GM12878 (cell line): ENCODE measurements at regions of chr5 and their contacts with region 1.

Region 1: GRCh38 chr5:72523960-72524582 is 16.9 kb upstream of the ZNF366 start:
- DNase-seq: peak; percentile 52
- ATAC-seq: peak; percentile 94
- H3K4me3 ChIP-seq: no peak overlapping the region
- H3K27ac ChIP-seq: no peak overlapping the region
- H3K4me1 ChIP-seq: no peaks in the 10 kb centered on the region
- H3K27me3 ChIP-seq: no peaks in the 10 kb centered on the region
- CTCF ChIP-seq: peak; percentile 50 to 86 (median 66); a peak in 5 of 6 replicates
- EP300 ChIP-seq: no peak; a peak in 1 of 4 replicates
- POLR2A ChIP-seq: no peak
- RAD21 ChIP-seq: peak; percentile 99

Region 2: GRCh38 chr5:72063219-72063819 is 460.8 kb before region 1 on chr5:
- CTCF ChIA-PET with region 1: no interaction called
- POLR2A ChIA-PET with region 1: no interaction called
- RAD21 ChIA-PET with region 1: no interaction called
- SMC1A ChIA-PET with region 1: no interaction called
- in situ Hi-C with region 1: no loop called
- intact Hi-C with region 1: no loop called
- DNase-seq: no peak
- ATAC-seq: no peak
- H3K4me3 ChIP-seq: no peak overlapping the region
- H3K27ac ChIP-seq: no peak overlapping the region
- H3K4me1 ChIP-seq: no peaks in the 10 kb centered on the region
- H3K27me3 ChIP-seq: no peaks in the 10 kb centered on the region
- CTCF ChIP-seq: no peak
- EP300 ChIP-seq: no peak
- POLR2A ChIP-seq: no peak
- RAD21 ChIP-seq: no peak

Region 3: DNA sequence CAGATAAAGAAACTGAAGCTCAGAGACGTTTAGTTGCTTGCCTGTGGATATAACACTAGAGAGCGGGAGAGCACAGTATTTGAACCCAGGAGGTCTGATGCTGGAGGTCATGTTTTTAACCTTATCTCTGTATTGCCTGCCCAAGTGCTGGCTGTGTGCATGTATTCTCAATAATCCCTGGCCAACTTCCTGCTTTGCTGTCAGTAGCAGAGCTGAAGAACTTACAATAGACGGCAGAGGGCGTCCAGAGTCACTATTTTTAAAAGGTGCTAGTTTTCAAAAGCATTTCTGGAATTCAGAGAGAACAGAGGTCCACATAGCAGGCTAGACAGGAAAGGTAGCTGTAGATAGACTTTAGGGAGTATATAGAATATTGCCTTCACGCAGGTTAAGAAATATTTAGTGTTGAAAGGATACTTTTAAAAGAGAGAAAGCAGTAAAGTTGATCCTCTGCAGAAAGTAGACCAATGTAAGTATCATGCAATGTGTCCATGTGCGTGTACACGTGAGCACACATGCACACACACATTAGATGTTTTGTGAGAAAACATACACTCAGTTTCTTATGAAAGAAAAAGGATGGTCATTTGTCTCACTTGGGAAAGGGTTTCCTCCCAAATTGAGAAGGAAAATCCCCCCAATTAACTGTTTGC is 157.6 kb before region 1 on chr5:
- CTCF ChIA-PET with region 1: interaction called, 238 read pairs
- POLR2A ChIA-PET with region 1: interaction called, 11 read pairs
- RAD21 ChIA-PET with region 1: interaction called, 159 read pairs
- SMC1A ChIA-PET with region 1: interaction called, 214 read pairs
- in situ Hi-C with region 1: loop called (anchors 10 kb)
- intact Hi-C with region 1: loop called (anchors 1 kb)
- DNase-seq: peak; percentile 43
- ATAC-seq: peak; percentile 98
- H3K4me3 ChIP-seq: no peak overlapping the region
- H3K27ac ChIP-seq: no peak overlapping the region
- H3K4me1 ChIP-seq: peaks cover 17% of the 10 kb centered on the region
- H3K27me3 ChIP-seq: no peaks in the 10 kb centered on the region
- CTCF ChIP-seq: peak; percentile 67 to 82 (median 76)
- EP300 ChIP-seq: no peak
- POLR2A ChIP-seq: no peak
- RAD21 ChIP-seq: peak; percentile 97

Region 4: DNA sequence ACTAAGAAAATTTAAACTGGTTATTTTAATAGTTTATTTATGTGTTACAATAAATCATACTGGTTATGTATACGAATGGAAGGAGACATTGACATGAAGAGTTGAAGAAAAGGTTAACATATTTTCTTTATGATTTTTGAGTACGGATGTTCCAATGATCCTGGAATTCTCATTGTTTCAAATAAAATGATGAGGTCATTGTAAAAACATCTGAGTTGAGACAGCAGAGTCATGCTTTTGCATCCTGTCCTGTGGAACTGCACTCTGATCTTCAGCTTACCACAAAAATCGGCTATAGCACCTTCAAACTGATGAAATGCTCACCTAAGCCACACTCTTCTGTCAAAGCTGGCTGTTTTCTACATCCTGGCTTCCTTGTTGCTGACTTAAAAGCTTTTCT is 136.1 kb before region 1 on chr5:
- CTCF ChIA-PET with region 1: interaction called, 323 read pairs
- POLR2A ChIA-PET with region 1: no interaction called
- RAD21 ChIA-PET with region 1: interaction called, 122 read pairs
- SMC1A ChIA-PET with region 1: interaction called, 159 read pairs
- in situ Hi-C with region 1: no loop called
- intact Hi-C with region 1: no loop called
- DNase-seq: no peak
- ATAC-seq: no peak
- H3K4me3 ChIP-seq: no peak overlapping the region
- H3K27ac ChIP-seq: no peak overlapping the region
- H3K4me1 ChIP-seq: no peaks in the 10 kb centered on the region
- H3K27me3 ChIP-seq: no peaks in the 10 kb centered on the region; a peak in 1 of 4 replicates
- CTCF ChIP-seq: no peak
- EP300 ChIP-seq: no peak
- POLR2A ChIP-seq: no peak
- RAD21 ChIP-seq: no peak

Region 5: DNA sequence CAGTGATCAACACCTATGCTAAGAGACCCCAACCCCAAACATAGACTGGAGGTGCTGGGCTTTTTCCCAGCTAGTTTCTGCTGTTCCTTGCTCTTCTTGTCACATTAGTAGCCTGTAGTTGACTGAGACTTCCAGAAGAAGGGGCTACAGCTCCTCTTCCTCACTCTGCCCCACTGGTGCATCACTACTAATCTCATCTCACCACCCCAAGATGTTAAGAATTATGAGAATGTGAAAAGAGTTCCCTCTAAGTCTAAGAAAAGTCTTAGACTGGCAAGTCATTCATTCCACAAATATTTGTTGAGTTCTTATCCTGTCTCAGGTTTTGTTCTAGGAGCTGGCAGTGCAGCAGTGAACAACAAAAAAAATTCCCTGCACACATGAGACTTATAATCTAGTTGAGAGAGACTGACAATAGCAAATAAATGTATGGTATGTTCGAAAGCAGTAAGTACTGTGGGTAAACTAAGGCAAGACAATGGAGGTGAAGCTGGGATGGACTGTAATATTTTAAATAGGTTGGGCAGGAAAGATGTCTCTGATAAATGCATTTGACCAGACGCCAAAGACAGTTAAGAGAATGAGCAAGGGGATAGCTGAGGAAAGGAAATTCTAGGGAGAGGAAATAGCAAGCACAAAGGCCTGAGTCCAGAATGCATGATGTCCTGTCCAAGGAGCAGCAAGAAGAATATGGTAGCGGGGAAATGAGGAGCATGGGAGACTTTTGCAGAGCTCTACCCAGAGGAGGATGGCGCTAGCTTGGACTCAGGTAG is 111.6 kb before region 1 on chr5:
- CTCF ChIA-PET with region 1: interaction called, 323 read pairs
- POLR2A ChIA-PET with region 1: no interaction called
- RAD21 ChIA-PET with region 1: interaction called, 34 read pairs
- SMC1A ChIA-PET with region 1: interaction called, 74 read pairs
- in situ Hi-C with region 1: no loop called
- intact Hi-C with region 1: no loop called
- DNase-seq: no peak
- ATAC-seq: no peak
- H3K4me3 ChIP-seq: no peak overlapping the region
- H3K27ac ChIP-seq: no peak overlapping the region
- H3K4me1 ChIP-seq: peaks cover 8% of the 10 kb centered on the region; the same call in 1 of the 2 replicates
- H3K27me3 ChIP-seq: no peaks in the 10 kb centered on the region
- CTCF ChIP-seq: peak in 2 of 3 experiments; percentile 7 to 18; a peak in 2 of 6 replicates
- EP300 ChIP-seq: no peak
- POLR2A ChIP-seq: no peak
- RAD21 ChIP-seq: peak; percentile 60

Region 6: DNA sequence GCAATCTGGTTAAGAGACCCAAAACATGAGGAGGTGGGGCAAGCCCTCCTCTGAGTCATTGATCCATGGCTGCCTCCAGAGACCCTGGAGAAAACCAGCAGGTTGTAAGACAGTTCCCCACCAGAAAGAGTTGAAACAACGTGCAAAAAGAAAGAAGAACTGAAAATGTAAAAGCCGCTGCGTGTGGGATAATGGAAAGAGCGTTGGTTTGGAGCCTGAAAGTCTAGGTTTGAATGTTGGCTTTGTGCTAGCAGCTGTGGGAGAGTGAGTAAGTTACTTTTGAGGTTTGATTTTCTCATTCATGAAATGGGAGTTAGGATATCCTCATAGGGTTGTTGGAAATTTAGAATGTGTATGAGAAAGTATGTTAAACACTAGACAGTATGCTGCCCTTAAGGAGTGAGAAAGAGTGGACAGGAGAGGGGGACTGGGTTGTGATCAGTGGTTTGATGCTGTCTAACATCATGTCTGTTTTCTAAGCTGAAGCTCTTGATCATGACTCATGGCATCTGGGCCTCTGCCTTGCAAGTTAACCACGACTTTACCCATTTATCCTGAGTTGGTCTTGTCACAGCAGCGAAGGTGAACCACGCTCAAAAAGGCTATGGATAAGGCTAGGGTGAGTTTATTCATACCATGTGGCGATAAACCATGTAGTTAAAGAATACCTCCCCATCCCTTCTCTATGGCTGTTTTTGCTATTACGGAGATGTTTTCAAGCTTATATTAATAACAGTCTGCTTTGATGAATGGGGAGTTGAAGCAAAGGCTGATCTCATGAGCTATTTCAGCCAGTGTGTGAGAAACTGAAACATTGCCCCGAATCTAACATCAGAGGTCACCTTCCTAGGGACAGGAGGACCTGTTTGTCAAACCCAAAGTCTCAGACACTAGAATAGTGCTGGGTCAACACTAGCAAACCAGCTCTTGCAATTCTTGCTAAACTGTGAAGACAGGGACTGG is 58.2 kb before region 1 on chr5:
- CTCF ChIA-PET with region 1: interaction called, 24 read pairs
- POLR2A ChIA-PET with region 1: interaction called, 5 read pairs
- RAD21 ChIA-PET with region 1: interaction called, 27 read pairs
- SMC1A ChIA-PET with region 1: interaction called, 21 read pairs
- in situ Hi-C with region 1: no loop called
- intact Hi-C with region 1: loop called (anchors 1 kb)
- DNase-seq: peak; percentile 92
- ATAC-seq: peak; percentile 83
- H3K4me3 ChIP-seq: peak overlapping the region; percentile 43
- H3K27ac ChIP-seq: peak overlapping the region; percentile 98
- H3K4me1 ChIP-seq: peaks cover 44% of the 10 kb centered on the region
- H3K27me3 ChIP-seq: no peaks in the 10 kb centered on the region
- CTCF ChIP-seq: no peak
- EP300 ChIP-seq: peak; percentile 85 to 92
- POLR2A ChIP-seq: peak; percentile 39; the same call in 1 of the 2 replicates
- RAD21 ChIP-seq: peak; percentile 35; the same call in 1 of the 2 replicates

Region 7: GRCh38 chr5:72510610-72511181 is 13.4 kb before region 1 on chr5:
- CTCF ChIA-PET with region 1: interaction called, 24 read pairs
- POLR2A ChIA-PET with region 1: interaction called, 5 read pairs
- RAD21 ChIA-PET with region 1: interaction called, 11 read pairs
- SMC1A ChIA-PET with region 1: interaction called, 34 read pairs
- in situ Hi-C with region 1: no loop called
- intact Hi-C with region 1: no loop called
- DNase-seq: no peak
- ATAC-seq: no peak
- H3K4me3 ChIP-seq: no peak overlapping the region
- H3K27ac ChIP-seq: peak overlapping the region; percentile 33
- H3K4me1 ChIP-seq: peaks cover 45% of the 10 kb centered on the region
- H3K27me3 ChIP-seq: no peaks in the 10 kb centered on the region
- CTCF ChIP-seq: no peak
- EP300 ChIP-seq: no peak
- POLR2A ChIP-seq: no peak
- RAD21 ChIP-seq: no peak

Region 8: GRCh38 chr5:72572236-72572765 is 48.2 kb after region 1 on chr5:
- CTCF ChIA-PET with region 1: no interaction called
- POLR2A ChIA-PET with region 1: no interaction called
- RAD21 ChIA-PET with region 1: no interaction called
- SMC1A ChIA-PET with region 1: no interaction called
- in situ Hi-C with region 1: no loop called
- intact Hi-C with region 1: no loop called
- DNase-seq: no peak
- ATAC-seq: no peak
- H3K4me3 ChIP-seq: no peak overlapping the region
- H3K27ac ChIP-seq: no peak overlapping the region
- H3K4me1 ChIP-seq: no peaks in the 10 kb centered on the region
- H3K27me3 ChIP-seq: no peaks in the 10 kb centered on the region; a peak in 1 of 4 replicates
- CTCF ChIP-seq: no peak
- EP300 ChIP-seq: no peak
- POLR2A ChIP-seq: no peak
- RAD21 ChIP-seq: no peak